Caco-2 (cell line): ENCODE measurements at regions of chr9 and their contacts with region 1.

Region 1: DNA sequence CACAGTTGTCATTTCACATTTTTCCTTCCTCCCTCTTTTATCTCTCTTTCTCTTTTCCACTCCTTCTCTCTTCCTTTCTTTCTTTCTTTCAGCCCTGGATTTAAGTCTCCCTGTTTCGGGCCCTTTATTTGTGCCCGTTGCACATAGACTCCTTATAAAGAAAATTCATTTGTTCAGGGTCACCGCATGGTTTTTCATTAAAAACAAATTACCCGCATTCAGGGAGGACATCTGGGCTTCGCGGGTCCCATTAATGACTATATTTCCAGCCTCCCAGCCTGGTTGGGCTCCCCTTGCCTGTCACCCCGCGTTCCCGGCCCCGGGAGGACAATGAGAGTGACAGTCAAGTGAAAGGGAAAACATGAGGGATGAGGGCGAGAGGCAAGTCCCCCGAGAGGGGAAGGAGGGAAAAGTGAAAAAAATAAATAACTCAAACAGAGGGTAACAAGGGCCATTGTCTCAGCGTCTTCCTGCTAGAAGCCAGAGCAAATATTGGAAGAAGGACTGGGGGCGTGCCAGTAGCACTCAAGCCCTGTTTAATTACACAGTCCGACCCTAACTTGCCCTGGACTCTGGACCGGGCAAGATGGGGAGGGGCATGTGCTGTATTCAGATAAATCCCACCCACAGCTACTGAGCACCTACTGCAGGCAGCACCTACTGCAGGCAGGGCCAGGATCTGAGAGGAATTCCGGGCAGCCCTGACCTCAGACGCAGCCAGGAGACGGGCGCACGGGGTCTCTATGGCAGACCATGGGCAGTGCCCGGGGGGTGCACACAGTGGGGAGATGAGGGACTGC is 166.2 kb downstream of the PAX5 start:
- DNase-seq: peak; percentile 80 to 91
- H3K4me3 ChIP-seq: no peak overlapping the region
- H3K4me3 Mint-ChIP-seq: peak overlapping the region; percentile 50
- H3K27ac Mint-ChIP-seq: peak overlapping the region; percentile 42
- H3K4me1 ChIP-seq: peaks cover 28% of the 10 kb centered on the region
- H3K4me1 Mint-ChIP-seq: peaks cover 21% of the 10 kb centered on the region
- H3K27me3 ChIP-seq: no peaks in the 10 kb centered on the region
- H3K27me3 Mint-ChIP-seq: no peaks in the 10 kb centered on the region
- CTCF ChIP-seq: no peak

Region 2: DNA sequence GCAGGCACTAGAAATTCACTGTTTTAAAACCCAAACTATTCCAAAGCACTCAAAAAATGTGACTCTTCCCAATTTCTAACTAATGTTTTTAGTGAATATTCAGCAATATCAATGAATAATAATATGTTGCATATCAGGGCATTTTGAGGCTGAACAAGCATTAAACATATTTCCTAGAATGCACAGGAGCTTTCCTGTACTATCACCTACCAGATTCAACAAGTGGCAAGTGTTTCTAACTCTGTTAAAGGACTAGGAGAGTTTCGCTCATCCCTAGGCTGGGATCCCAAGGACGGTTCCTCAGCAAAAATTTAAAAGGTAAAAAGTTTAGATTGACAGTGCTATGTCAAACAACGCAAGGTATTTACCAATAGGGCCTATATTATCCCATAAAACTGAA is 630.6 kb before region 1 on chr9:
- CTCF ChIA-PET with region 1: no interaction called
- POLR2A ChIA-PET with region 1: no interaction called
- intact Hi-C with region 1: no loop called
- DNase-seq: no peak
- H3K4me3 ChIP-seq: no peak overlapping the region
- H3K4me3 Mint-ChIP-seq: no peak overlapping the region
- H3K27ac Mint-ChIP-seq: no peak overlapping the region
- H3K4me1 ChIP-seq: no peaks in the 10 kb centered on the region
- H3K4me1 Mint-ChIP-seq: no peaks in the 10 kb centered on the region
- H3K27me3 ChIP-seq: no peaks in the 10 kb centered on the region
- H3K27me3 Mint-ChIP-seq: no peaks in the 10 kb centered on the region
- CTCF ChIP-seq: no peak

Region 3: GRCh38 chr9:36798350-36799065 is 69.4 kb before region 1 on chr9:
- CTCF ChIA-PET with region 1: no interaction called
- POLR2A ChIA-PET with region 1: no interaction called
- intact Hi-C with region 1: loop called (anchors 2 kb)
- DNase-seq: peak; percentile 49 to 50
- H3K4me3 ChIP-seq: no peak overlapping the region
- H3K4me3 Mint-ChIP-seq: no peak overlapping the region
- H3K27ac Mint-ChIP-seq: no peak overlapping the region
- H3K4me1 ChIP-seq: no peaks in the 10 kb centered on the region
- H3K4me1 Mint-ChIP-seq: no peaks in the 10 kb centered on the region
- H3K27me3 ChIP-seq: no peaks in the 10 kb centered on the region
- H3K27me3 Mint-ChIP-seq: peaks cover 9% of the 10 kb centered on the region
- CTCF ChIP-seq: peak; percentile 31 to 47

Region 4: GRCh38 chr9:36840898-36841536 is 26.9 kb before region 1 on chr9:
- CTCF ChIA-PET with region 1: interaction called, 7 read pairs
- POLR2A ChIA-PET with region 1: no interaction called
- intact Hi-C with region 1: loop called (anchors 1 kb)
- DNase-seq: peak; percentile 74 to 77
- H3K4me3 ChIP-seq: no peak overlapping the region
- H3K4me3 Mint-ChIP-seq: no peak overlapping the region
- H3K27ac Mint-ChIP-seq: peak overlapping the region; percentile 16
- H3K4me1 ChIP-seq: peaks cover 40% of the 10 kb centered on the region
- H3K4me1 Mint-ChIP-seq: peaks cover 13% of the 10 kb centered on the region
- H3K27me3 ChIP-seq: no peaks in the 10 kb centered on the region
- H3K27me3 Mint-ChIP-seq: no peaks in the 10 kb centered on the region
- CTCF ChIP-seq: no peak

Region 5: DNA sequence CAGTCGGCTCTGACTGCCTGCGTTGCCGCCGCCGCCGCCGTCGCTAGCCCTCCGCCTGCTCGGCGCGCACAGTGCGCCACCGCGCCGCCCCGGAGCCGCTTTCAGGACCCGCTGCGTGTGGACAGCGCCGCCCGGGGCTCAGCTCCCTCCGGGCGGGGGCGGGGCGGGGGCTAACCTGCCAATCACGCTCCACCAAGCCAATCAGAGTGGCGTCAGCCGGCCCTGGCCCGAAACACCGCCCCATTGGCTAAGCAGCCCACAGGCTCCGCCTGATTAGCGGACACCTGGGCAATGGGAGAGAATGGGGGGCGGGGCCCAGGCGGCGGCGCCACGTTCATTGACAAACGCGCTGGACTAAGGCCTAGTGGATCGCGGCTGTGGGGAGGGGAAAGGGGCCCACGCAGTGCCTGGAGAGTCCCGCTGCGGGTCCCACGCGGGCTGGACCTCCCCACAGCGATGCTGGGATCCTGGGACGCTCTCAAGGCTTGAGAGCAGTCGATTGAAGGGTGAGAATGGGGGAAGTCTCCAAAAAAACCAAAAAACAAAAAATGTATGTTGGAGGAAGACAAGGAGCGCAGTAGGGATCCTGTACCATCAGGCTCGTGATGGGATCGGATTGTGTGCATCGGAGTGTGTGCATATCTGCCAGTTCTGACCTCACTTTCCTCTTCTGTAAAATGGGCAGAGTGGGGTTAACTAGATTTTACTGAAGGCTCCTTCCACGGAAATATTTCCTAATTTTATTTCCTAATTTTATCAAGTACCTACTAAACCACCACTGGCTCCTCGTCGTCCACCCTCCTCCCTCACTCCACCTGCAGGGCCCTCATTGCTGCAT is 159.9 kb after region 1 on chr9:
- CTCF ChIA-PET with region 1: no interaction called
- POLR2A ChIA-PET with region 1: no interaction called
- intact Hi-C with region 1: loop called (anchors 1 kb)
- DNase-seq: peak; percentile 98
- H3K4me3 ChIP-seq: peak overlapping the region; percentile 28
- H3K4me3 Mint-ChIP-seq: peak overlapping the region; percentile 78
- H3K27ac Mint-ChIP-seq: peak overlapping the region; percentile 23
- H3K4me1 ChIP-seq: peaks cover 5% of the 10 kb centered on the region; the same call in 1 of the 2 replicates
- H3K4me1 Mint-ChIP-seq: no peaks in the 10 kb centered on the region
- H3K27me3 ChIP-seq: no peaks in the 10 kb centered on the region; the same call in 1 of the 2 replicates
- H3K27me3 Mint-ChIP-seq: peaks cover 19% of the 10 kb centered on the region
- CTCF ChIP-seq: no peak